Psoas muscle (tissue), 8 donors: ENCODE measurements at regions of chr10 and their contacts with region 1.

Region 1: DNA sequence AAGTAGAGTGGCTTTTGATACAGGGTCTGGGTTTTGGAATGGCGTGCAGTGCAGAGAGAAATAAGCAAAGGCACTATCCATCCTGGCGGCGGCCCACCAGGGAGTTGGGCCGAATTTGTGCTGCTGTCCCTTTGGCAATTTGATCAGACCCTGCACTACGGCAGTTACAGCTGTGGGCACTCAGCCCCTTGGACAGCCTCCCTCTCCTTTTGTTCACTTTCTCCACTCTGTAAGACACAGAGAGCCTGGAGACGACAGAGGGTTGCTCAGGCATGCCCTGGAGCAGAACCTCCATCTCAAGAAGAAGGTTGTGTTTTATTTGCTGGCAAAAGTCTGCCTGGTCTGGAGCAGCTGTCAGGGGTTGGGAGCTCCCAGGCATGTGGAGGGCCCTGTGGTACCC is 55.8 kb downstream of the LHPP start:
- DNase-seq: peak in 1 of 2 donors; percentile 14
- ATAC-seq: no peak
- H3K4me3 ChIP-seq: no peak overlapping the region
- H3K27ac ChIP-seq: no peak overlapping the region
- H3K4me1 ChIP-seq: peaks cover 14% of the 10 kb centered on the region
- H3K27me3 ChIP-seq: no peaks in the 10 kb centered on the region
- CTCF ChIP-seq: no peak

Region 2: DNA sequence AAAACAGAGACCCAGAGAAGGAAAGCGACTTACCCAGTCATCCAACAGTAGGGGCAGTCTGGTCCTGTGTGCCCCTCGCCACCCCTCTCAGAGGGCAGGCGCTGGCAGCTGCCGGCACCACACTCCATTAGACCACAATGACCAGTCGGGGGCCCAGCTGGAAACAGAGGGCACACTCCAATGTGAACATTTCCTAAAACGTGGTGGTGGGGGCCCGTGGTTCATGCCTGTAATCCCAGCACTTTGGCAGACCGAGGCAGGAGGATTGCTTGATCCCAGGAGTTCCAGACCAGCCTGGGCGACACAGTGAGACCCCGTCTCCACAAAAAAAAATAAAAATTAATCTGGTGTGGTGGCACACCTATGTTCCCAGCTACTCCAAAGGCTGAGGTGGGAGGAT is 97.8 kb before region 1 on chr10:
- intact Hi-C with region 1: loop called in 1 of 2 experiments (anchors 5 kb)
- DNase-seq: no peak
- ATAC-seq: no peak
- H3K4me3 ChIP-seq: peak overlapping the region; percentile 90
- H3K27ac ChIP-seq: no peak overlapping the region
- H3K4me1 ChIP-seq: peaks cover 17% of the 10 kb centered on the region
- H3K27me3 ChIP-seq: no peaks in the 10 kb centered on the region
- CTCF ChIP-seq: no peak

Region 3: GRCh38 chr10:124748166-124748565 is 230.7 kb after region 1 on chr10:
- intact Hi-C with region 1: no loop called
- DNase-seq: no peak
- ATAC-seq: no peak
- H3K4me3 ChIP-seq: no peak overlapping the region
- H3K27ac ChIP-seq: no peak overlapping the region
- H3K4me1 ChIP-seq: peaks cover 15% of the 10 kb centered on the region
- H3K27me3 ChIP-seq: no peaks in the 10 kb centered on the region
- CTCF ChIP-seq: no peak